ENCODE measurements at regions of chr1 and their contacts with region 1.

Region 1: DNA sequence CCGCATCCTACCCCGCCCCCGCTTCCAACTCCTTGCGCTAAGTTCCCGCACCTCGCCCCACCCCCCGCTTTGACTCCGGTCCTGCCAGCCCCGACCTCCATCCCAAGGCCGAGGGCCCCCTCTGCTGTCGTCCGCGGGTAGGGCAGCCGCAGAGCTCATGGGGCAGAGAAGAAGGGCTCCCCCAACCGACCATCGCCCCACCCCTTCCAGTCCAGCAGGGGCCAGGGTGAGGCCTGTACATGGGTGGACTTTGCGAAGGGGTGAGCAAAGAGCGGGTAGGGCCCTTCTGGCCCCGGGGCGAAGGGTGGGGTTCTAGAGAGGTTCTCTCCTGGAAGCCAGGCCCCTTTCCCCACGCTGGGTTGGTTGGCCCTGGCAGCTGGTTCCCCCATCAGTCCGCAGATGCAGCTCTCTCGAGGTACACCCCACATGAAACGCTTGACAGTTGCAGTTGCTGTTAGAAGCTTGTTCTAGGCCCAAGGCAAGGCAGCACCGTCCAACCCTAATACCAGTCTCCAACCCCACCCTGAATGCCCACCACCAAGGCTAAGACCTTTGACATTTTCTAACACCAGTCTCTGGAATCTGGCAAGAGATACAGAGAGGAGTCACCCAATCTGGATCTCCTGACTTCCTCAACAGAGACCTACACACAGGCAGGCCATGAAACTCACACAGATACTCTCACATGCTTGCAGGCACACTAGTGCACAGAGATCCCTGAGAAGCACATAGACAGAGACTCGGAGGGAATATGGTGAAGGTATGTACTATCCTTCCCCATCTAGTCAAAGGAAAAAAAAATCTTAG is 25.3 kb upstream of the ADGRB2 start:
- DNase-seq: peak; percentile 94 to 99
- H3K4me3 ChIP-seq: no peak overlapping the region
- CTCF ChIP-seq: no peak
- POLR2A ChIP-seq: no peak

Region 2: DNA sequence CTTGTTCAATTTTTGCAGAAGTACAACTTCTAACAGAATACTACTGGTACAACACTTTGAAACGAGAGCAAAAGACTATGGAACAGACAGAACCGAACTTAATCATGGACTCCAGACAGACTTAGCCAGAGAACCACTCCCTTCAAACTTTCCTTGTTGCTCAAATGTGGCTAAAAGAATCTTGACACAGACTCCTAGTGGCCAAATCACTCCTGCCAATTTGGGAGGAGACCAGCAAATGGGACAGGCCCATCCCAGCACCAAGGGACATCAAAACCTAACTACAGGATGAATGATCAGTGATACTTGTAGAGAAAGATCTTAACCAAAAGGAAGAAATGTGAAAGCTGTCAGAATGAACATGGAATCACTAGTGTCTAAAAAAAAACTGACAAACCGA is 1220.1 kb before region 1 on chr1:
- intact Hi-C with region 1: no loop called
- DNase-seq: peak in 1 of 2 donors; percentile 34
- H3K4me3 ChIP-seq: no peak overlapping the region
- CTCF ChIP-seq: no peak
- POLR2A ChIP-seq: no peak

Region 3: GRCh38 chr1:31576201-31576669 is 213.2 kb before region 1 on chr1 and contains the start of gene TINAGL1:
- intact Hi-C with region 1: loop called (anchors 10 kb)
- DNase-seq: no peak
- H3K4me3 ChIP-seq: peak within 1 kb of the TSS; percentile 20
- CTCF ChIP-seq: no peak
- POLR2A ChIP-seq: no peak
- total RNA-seq, gene TINAGL1: 39.1 to 107 (median 69.2) TPM

Region 4: DNA sequence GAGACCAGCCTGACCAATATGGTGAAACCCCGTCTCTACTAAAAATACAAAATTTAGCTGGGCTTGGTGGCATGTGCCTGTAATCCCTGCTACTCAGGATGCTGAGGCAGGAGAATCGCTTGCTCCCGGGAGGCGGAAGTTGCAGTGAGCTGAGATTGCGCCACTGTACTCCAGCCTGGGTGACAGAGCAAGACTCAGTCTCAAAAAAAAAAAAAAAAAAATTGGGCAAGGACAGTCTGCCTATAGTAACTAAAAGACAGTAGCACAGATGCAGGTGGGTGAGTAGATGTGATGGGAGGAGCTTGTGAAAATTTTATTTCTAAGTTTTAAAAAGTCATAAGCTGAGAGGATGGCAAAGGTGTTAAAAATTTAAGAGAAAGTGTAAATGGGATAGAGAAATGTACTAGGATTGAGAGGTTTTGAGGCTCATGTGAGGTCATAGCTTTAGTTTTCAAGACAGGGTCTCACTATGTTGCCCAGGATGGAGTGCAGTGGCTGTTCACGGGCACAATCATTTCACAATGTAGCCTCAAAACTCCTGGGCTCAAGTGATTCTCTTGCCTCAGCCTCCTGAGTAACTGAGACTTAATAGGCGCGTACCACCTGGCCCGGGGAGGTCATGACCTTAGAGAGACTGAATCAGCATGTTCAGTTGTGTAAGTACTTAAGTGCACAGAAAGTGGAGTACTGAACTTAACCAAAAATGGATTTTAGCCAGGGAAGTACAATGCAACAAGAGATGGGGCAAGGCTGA is 115.1 kb after region 1 on chr1:
- intact Hi-C with region 1: no loop called
- DNase-seq: peak in 1 of 2 donors; percentile 83
- H3K4me3 ChIP-seq: no peak overlapping the region
- CTCF ChIP-seq: no peak
- POLR2A ChIP-seq: no peak

Region 5: DNA sequence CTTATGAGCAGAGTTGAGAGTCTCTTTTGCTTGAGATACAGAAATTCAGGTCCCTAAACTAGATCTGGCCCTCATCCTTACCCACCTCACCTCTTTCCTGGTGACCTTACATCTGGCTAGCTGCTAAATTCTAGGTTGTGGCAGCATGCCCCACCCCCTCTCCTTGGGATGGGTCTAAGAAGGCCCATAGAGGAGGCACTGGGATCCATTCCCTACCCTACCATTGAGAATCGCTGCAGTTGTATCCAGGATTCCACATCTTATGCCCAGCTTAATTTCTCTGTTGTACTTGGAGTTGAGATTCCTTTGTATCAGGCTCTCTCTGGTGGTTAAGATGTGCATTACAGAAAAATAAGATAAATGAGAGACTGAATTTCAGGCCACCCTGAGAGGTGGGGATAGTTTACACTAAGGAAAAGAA is 273.8 kb after region 1 on chr1:
- intact Hi-C with region 1: loop called (anchors 10 kb)
- DNase-seq: peak in 1 of 2 donors; percentile 63
- H3K4me3 ChIP-seq: no peak overlapping the region
- CTCF ChIP-seq: no peak
- POLR2A ChIP-seq: no peak